Esophagus muscularis mucosa (tissue), 4 donors: ENCODE measurements at regions of chr14 and their contacts with region 1.

Region 1: DNA sequence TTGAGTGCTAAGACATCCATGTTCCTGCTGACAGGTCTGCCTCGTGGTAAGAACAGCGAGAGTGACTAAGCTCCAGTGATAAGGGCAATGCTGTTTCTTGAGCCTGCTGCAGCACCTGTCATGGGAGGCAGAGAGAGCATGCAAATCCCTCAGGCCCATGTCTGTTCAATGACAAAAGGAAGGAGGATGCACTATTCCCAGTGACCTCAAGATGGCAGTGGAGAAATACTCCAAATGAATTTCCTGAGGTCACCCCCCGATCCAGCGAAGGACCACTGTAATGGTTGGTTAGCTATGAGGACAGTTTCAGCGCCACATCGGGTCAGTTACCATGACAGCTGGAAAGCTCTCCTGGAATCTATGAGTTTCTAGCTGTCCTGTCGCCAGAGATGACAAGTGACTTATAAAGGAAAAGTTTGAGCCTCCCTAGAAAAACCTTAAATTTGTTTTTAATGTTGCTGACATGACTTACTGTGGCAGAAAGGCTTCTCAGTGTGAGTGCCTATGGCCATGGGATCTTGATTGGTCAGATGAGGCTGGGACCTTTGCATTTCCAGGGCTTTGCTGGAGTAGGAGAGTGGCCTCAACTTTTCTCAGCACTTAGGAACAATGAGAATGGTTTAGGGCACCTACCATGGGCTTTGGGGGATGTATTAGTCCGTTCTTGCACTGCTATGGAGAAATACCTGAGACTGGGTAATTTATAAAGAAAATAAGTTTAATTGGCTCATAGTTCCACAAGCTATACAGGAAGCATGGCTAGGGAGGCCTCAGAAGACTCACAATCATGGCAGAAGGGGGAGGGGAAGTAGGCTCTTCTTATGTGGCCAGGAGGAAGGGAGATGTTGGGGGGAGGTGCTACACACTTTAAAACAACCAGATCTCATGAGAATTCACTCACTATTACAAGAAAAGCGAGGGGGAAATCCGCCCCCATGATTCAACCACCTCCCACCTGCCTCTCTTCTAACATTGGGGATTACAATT is 88.0 kb upstream of the TMEM260 start:
- DNase-seq: peak; percentile 70
- H3K4me3 ChIP-seq: peak overlapping the region in 1 of 4 donors; percentile 20
- H3K27ac ChIP-seq: no peak overlapping the region
- H3K4me1 ChIP-seq: peaks cover 0 to 6% (median 6%) of the 10 kb centered on the region in 4 donors
- H3K27me3 ChIP-seq: no peaks in the 10 kb centered on the region
- CTCF ChIP-seq: peak; percentile 60 to 82 (median 65)
- EP300 ChIP-seq: no peak
- POLR2A ChIP-seq: no peak

Region 2: DNA sequence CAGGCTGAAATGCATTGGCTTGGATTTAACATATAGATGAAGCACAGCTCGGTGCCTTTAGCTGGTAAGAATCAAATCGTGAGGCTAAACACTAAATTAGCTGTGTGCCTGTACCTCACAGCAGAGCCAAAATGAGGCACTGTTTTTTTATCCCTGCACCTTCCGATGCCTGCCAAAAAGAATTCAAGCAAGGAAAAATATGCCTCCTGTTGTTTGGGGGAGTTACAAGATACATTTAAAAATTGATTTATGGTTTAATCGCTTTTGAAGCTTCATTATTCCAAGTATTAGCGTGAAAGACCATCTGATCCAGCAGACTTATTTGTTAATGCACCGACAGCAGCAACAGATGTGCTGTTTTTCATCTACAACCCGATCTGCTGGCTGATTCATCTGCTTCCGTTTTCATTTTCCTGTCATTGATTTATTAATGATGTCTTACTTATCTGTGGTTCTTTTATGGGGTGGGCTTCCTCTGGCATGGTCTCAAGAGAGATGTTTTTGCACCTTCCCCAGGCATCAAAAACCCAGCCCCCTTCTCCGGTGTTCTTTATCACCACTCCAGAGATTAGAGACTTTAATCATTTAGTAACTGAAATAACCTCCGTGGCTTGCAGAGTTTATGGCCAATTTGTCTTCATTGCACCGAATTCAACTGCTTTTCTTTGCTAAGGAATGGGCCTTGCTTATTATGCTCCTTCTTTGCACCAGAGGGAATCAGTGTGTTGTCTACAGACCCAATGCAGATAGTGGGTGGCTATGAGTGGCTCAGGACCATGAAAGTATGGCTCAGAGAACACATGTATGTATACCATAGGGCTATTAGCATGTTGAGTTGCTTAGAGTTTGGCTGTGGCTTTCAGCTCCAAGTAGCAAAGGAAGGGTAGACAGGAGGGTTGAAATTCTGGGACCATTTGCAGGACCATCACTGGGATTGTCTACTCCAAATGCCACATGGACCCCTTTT is 78.8 kb before region 1 on chr14:
- intact Hi-C with region 1: no loop called
- DNase-seq: no peak
- H3K4me3 ChIP-seq: no peak overlapping the region
- H3K27ac ChIP-seq: no peak overlapping the region
- H3K4me1 ChIP-seq: peaks cover 0 to 10% (median 8%) of the 10 kb centered on the region in 4 donors
- H3K27me3 ChIP-seq: no peaks in the 10 kb centered on the region
- CTCF ChIP-seq: no peak
- EP300 ChIP-seq: no peak
- POLR2A ChIP-seq: no peak

Region 3: DNA sequence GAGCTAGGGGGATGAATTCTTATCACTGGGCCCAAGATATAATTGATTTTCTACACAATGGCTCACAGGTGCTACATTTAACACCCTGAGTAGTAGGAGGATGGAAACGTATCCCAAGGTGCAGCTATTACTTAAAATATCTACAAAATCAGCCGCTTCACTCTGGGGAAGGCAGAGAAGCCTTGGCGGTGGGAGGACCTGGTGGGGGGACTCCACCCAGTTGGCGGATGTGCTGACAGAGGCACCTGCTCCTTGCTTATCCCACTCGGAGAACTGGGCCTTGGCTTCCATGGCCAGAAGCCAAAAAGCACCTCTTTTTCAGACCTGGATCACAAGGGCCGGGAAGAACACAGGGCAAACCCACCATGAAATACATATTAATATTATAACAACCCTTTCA is 212.4 kb after region 1 on chr14:
- intact Hi-C with region 1: no loop called
- DNase-seq: no peak
- H3K4me3 ChIP-seq: no peak overlapping the region
- H3K27ac ChIP-seq: no peak overlapping the region
- H3K4me1 ChIP-seq: no peaks in the 10 kb centered on the region
- H3K27me3 ChIP-seq: peaks cover 0 to 11% (median 0%) of the 10 kb centered on the region in 4 donors
- CTCF ChIP-seq: no peak
- EP300 ChIP-seq: no peak
- POLR2A ChIP-seq: no peak

Region 4: GRCh38 chr14:57317316-57317715 is 825.7 kb after region 1 on chr14:
- intact Hi-C with region 1: loop called (anchors 2 kb)
- DNase-seq: no peak
- H3K4me3 ChIP-seq: no peak overlapping the region
- H3K27ac ChIP-seq: no peak overlapping the region
- H3K4me1 ChIP-seq: no peaks in the 10 kb centered on the region
- H3K27me3 ChIP-seq: peaks cover 0 to 6% (median 0%) of the 10 kb centered on the region in 4 donors
- CTCF ChIP-seq: peak; percentile 76 to 85 (median 83)
- EP300 ChIP-seq: no peak
- POLR2A ChIP-seq: no peak